ENCODE measurements at regions of chr20 and their contacts with region 1.

Region 1: DNA sequence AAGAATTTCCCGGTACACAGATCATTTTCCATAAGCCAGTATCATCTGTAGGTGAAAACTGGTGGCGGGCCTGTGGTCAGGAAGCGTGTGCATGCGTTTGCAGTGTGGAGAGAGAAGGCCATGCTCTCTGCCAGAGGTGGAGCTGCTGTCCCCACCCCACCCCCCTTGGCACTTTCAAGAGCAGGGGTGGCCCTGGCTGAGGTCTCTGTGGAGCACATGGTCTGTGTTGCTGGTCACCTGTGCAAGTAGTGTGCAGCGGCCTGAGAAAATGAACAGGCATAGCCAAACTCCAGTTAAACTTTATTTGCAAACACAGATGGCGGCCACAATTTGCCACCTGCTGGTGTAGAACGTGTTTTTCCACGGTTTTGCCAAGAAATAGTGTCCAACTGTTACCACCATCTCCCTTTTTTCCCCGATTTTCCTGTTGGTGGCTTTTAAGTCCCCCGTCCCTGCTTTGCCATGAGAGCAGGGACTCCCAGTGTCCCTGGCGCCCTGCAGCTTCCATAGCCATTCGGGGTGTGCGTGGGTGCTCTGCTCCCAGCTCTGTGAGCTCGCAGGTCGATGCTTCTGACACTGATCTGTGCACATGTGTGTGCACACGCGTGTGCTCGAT is 2.5 kb downstream of the ADRM1 start:
- DNase-seq: no peak
- H3K4me3 ChIP-seq: no peak overlapping the region
- H3K4me1 ChIP-seq: peaks cover 11% of the 10 kb centered on the region
- H3K27me3 ChIP-seq: no peaks in the 10 kb centered on the region

Region 2: GRCh38 chr20:62382306-62383198 is 77.3 kb after region 1 on chr20:
- in situ Hi-C with region 1: loop called (anchors 5 kb)
- DNase-seq: peak; percentile 71 to 90
- H3K4me3 ChIP-seq: no peak overlapping the region
- H3K4me1 ChIP-seq: peaks cover 3% of the 10 kb centered on the region
- H3K27me3 ChIP-seq: no peaks in the 10 kb centered on the region

Region 3: GRCh38 chr20:62516345-62516744 is 211.1 kb after region 1 on chr20:
- in situ Hi-C with region 1: no loop called
- DNase-seq: no peak
- H3K4me3 ChIP-seq: no peak overlapping the region
- H3K4me1 ChIP-seq: no peaks in the 10 kb centered on the region
- H3K27me3 ChIP-seq: peaks cover 16% of the 10 kb centered on the region

Measured in HAP-1 (cell line).